ENCODE measurements at regions of chr7 and their contacts with region 1.

Region 1: GRCh38 chr7:99597762-99598501 is at the start of gene TMEM225B:
- DNase-seq: peak in 1 of 2 experiments; percentile 55
- H3K4me3 ChIP-seq: no peak within 1 kb of the TSS
- H3K27ac ChIP-seq: no peak within 1 kb of the TSS
- H3K4me1 ChIP-seq: peaks cover 0 to 3% (median 2%) of the 10 kb centered on the region in 4 experiments; a peak in 3 of 7 replicates
- H3K27me3 ChIP-seq: no peaks in the 10 kb centered on the region
- CTCF ChIP-seq: no peak
- EP300 ChIP-seq: no peak
- POLR2A ChIP-seq: no peak
- RAD21 ChIP-seq: no peak
- total RNA-seq, gene TMEM225B: not detected in 2 replicates

Region 2: GRCh38 chr7:99409806-99410205 is 188.1 kb before region 1 on chr7:
- CTCF ChIA-PET with region 1: no interaction called
- POLR2A ChIA-PET with region 1: no interaction called
- DNase-seq: no peak
- H3K4me3 ChIP-seq: peak overlapping the region; percentile 93 to 99 (median 97)
- H3K27ac ChIP-seq: peak overlapping the region; percentile 100; the same call in 1 of the 2 replicates
- H3K4me1 ChIP-seq: peaks cover 0 to 5% (median 3%) of the 10 kb centered on the region in 4 experiments; a peak in 2 of 7 replicates
- H3K27me3 ChIP-seq: no peaks in the 10 kb centered on the region
- CTCF ChIP-seq: no peak
- EP300 ChIP-seq: no peak
- POLR2A ChIP-seq: no peak
- RAD21 ChIP-seq: no peak

Region 3: DNA sequence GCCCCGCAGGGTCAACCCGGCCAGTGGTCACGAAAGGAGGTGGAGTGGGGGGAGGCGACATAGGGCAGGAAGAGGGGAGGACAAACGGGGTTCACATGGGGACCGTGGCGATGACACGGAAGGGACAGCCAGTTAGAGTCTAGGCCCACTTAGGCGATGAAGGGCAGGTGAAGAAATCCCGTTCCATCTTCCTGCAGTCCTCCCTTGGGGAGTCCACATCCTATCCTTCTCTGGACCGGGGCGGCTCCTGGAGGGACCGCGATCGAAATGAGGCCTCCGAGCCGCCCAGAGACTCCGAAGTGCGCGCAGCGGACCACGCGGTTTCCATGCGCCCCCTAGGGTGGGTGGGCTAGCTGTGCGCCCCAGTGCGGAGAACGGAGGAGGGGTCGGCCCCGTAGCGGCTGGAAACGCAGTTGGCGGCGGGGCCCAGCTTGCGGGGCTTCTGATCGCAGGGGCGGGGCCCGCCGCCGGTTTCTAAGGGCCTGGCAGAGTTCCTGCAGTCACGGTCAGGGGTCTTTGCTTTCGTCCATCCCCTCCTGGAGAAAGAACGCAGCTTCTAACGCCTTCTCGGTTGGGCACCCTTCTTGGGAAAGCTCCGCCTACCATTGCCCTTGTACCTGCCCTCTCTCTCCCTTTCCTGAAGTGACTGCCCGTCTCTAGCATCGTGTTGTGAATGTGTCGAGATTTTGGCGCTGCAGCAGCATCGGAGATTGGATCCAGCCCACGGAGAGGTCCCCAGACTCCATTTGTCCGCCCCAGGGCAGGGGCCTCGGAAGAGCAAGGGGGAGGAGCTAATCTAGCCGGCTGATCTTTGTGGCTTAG is 17.8 kb before region 1 on chr7:
- CTCF ChIA-PET with region 1: interaction called, 14 read pairs
- POLR2A ChIA-PET with region 1: interaction called, 11 read pairs
- DNase-seq: peak in 1 of 2 experiments; percentile 89
- H3K4me3 ChIP-seq: peak overlapping the region; percentile 55 to 67 (median 60)
- H3K27ac ChIP-seq: peak overlapping the region; percentile 20; the same call in 1 of the 2 replicates
- H3K4me1 ChIP-seq: peaks cover 0 to 6% (median 2%) of the 10 kb centered on the region in 4 experiments; a peak in 3 of 7 replicates
- H3K27me3 ChIP-seq: no peaks in the 10 kb centered on the region
- CTCF ChIP-seq: peak; percentile 59 to 67 (median 64)
- EP300 ChIP-seq: peak in 1 of 2 experiments; percentile 62; a peak in 1 of 3 replicates
- POLR2A ChIP-seq: peak in 1 of 2 experiments; percentile 63; a peak in 1 of 3 replicates
- RAD21 ChIP-seq: peak; percentile 47 to 62; a peak in 3 of 4 replicates

Measured in H1 (cell line).